Sigmoid colon (tissue), 7 donors: ENCODE measurements at regions of chr1 and their contacts with region 1.

Region 1: GRCh38 chr1:203625628-203626019 is 1.0 kb upstream of the ATP2B4 start:
- DNase-seq: no peak
- H3K4me3 ChIP-seq: peak overlapping the region in 3 of 4 donors; percentile 71 to 88 (median 84)
- H3K27ac ChIP-seq: peak overlapping the region; percentile 88 to 98 (median 94)
- H3K4me1 ChIP-seq: peaks cover 0 to 33% (median 26%) of the 10 kb centered on the region in 4 donors
- H3K27me3 ChIP-seq: no peaks in the 10 kb centered on the region
- CTCF ChIP-seq: peak in 2 of 4 experiments; percentile 18 to 34
- EP300 ChIP-seq: no peak
- POLR2A ChIP-seq: no peak

Region 2: GRCh38 chr1:203229471-203230135 is 396.0 kb before region 1 on chr1 and contains the start of gene CHIT1:
- intact Hi-C with region 1: no loop called
- DNase-seq: no peak
- H3K4me3 ChIP-seq: no peak within 1 kb of the TSS
- H3K27ac ChIP-seq: no peak within 1 kb of the TSS
- H3K4me1 ChIP-seq: no peaks in the 10 kb centered on the region
- H3K27me3 ChIP-seq: no peaks in the 10 kb centered on the region
- CTCF ChIP-seq: no peak
- EP300 ChIP-seq: no peak
- POLR2A ChIP-seq: no peak
- total RNA-seq, gene CHIT1: not detected

Region 3: GRCh38 chr1:203504397-203505250 is 121.0 kb before region 1 on chr1:
- intact Hi-C with region 1: loop called (anchors 2 kb)
- DNase-seq: peak; percentile 94
- H3K4me3 ChIP-seq: no peak overlapping the region
- H3K27ac ChIP-seq: peak overlapping the region; percentile 7 to 94 (median 86)
- H3K4me1 ChIP-seq: peaks cover 3 to 79% (median 64%) of the 10 kb centered on the region in 4 donors
- H3K27me3 ChIP-seq: no peaks in the 10 kb centered on the region
- CTCF ChIP-seq: peak; percentile 56 to 87 (median 84)
- EP300 ChIP-seq: no peak
- POLR2A ChIP-seq: no peak

Region 4: GRCh38 chr1:203572134-203572625 is 53.4 kb before region 1 on chr1:
- intact Hi-C with region 1: no loop called
- DNase-seq: no peak
- H3K4me3 ChIP-seq: no peak overlapping the region
- H3K27ac ChIP-seq: peak overlapping the region in 1 of 4 donors; percentile 49
- H3K4me1 ChIP-seq: peaks cover 0 to 6% (median 3%) of the 10 kb centered on the region in 4 donors
- H3K27me3 ChIP-seq: no peaks in the 10 kb centered on the region
- CTCF ChIP-seq: no peak
- EP300 ChIP-seq: no peak
- POLR2A ChIP-seq: no peak

Region 5: DNA sequence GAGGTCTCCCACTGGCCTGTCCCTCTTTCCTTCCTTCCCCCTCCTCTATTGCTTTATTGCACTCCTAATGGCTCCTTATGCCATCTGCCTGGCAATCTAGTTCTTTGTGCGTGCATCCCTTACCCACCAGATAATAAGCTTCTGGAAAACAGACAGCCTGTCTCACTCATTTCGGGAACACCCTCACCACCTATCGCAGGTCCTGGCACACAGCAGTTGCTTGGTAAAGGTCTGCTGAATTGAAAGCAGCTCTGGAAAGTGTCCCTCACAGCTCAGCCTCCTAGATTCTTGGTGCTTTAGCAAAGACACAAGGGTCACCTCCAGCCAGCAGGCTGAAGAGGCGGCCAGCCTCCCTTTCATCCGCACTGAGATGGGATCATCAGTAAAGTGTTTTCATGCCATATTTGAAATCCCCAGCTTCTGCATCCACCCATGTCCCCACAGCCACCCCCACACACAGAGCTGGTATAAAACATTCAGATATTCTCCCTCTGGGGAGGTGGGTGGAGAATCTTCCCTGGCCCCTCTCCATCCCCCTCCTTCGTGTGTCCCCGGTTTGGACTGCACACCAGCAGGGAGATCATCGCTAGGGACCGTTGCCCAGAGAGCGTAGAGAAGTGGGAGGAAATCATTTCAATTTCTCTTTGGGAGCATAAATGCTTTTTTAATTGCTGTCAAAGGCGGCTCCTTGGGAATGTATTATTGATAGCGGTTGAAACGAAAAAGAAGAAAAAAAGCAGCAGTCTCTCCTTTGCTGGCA is 28.1 kb before region 1 on chr1:
- intact Hi-C with region 1: loop called (anchors 1 kb)
- DNase-seq: peak; percentile 68
- H3K4me3 ChIP-seq: peak overlapping the region in 2 of 4 donors; percentile 17 to 19
- H3K27ac ChIP-seq: peak overlapping the region; percentile 59 to 82 (median 75)
- H3K4me1 ChIP-seq: peaks cover 0 to 51% (median 45%) of the 10 kb centered on the region in 4 donors
- H3K27me3 ChIP-seq: no peaks in the 10 kb centered on the region
- CTCF ChIP-seq: no peak
- EP300 ChIP-seq: no peak
- POLR2A ChIP-seq: no peak

Region 6: DNA sequence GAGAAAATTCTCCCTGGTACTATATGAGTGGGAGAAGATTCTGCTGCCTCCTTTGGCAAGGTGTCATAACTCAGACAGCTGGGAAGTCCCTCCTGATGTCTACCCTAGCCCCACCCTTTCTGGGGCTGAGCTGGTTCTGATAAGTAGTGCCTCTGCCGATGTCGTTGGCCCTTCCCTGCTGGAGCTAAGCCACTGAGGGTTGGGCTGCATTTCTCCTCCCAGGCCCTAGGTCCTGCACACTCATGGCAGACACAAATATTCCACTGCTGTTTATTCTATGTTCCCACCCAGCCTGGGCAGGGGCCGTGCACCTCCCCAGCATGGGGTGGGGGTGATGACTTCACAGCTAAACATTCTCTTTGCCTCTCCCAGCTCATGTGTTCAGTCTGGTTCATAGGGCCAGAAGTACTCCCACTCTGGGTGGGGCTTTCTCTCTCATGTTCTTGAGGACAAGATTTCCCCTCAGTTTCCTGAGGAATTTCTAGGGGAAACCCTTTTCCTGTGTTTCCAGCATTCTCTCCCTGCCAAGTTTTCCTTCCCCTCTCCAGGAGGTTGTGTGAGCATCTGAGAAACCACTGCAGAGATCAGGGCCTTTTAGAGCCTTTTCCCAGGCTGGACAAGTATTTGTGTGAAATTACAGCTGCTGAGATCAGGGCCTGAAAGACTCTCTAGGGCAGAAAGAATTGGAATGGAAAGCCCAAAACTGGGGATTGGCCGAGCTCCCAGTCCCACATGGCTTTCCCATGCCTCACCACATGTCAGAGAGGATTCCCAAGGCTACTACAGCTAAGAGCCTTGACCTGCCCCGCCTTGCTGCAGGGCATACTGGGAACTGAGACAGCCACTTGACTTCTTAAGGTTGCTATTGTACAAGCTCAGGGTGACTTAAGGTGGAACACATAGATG is 67.2 kb after region 1 on chr1:
- intact Hi-C with region 1: loop called (anchors 2 kb)
- DNase-seq: peak; percentile 96
- H3K4me3 ChIP-seq: no peak overlapping the region
- H3K27ac ChIP-seq: peak overlapping the region; percentile 87 to 93 (median 88)
- H3K4me1 ChIP-seq: peaks cover 0 to 100% (median 99%) of the 10 kb centered on the region in 4 donors
- H3K27me3 ChIP-seq: no peaks in the 10 kb centered on the region
- CTCF ChIP-seq: no peak
- EP300 ChIP-seq: peak in 1 of 4 donors; percentile 64
- POLR2A ChIP-seq: no peak

Region 7: GRCh38 chr1:203795441-203796235 is 170.0 kb after region 1 on chr1 and contains the starts of genes ZBED6 and ZC3H11A:
- intact Hi-C with region 1: loop called (anchors 5 kb)
- DNase-seq: peak; percentile 100
- H3K4me3 ChIP-seq: peak within 1 kb of the TSS; percentile 68 to 90 (median 78)
- H3K27ac ChIP-seq: peak within 1 kb of the TSS; percentile 92 to 99 (median 96)
- H3K4me1 ChIP-seq: peaks cover 0 to 46% (median 44%) of the 10 kb centered on the region in 4 donors
- H3K27me3 ChIP-seq: no peaks in the 10 kb centered on the region
- CTCF ChIP-seq: no peak
- EP300 ChIP-seq: peak in 1 of 4 donors; percentile 65
- POLR2A ChIP-seq: peak; percentile 59 to 65
- total RNA-seq, gene ZBED6: 11.0 to 21.4 (median 19.6) TPM
- total RNA-seq, gene ZC3H11A: 84.9 to 111 (median 88.6) TPM